ENCODE measurements at regions of chr12 and their contacts with region 1.

Region 1: DNA sequence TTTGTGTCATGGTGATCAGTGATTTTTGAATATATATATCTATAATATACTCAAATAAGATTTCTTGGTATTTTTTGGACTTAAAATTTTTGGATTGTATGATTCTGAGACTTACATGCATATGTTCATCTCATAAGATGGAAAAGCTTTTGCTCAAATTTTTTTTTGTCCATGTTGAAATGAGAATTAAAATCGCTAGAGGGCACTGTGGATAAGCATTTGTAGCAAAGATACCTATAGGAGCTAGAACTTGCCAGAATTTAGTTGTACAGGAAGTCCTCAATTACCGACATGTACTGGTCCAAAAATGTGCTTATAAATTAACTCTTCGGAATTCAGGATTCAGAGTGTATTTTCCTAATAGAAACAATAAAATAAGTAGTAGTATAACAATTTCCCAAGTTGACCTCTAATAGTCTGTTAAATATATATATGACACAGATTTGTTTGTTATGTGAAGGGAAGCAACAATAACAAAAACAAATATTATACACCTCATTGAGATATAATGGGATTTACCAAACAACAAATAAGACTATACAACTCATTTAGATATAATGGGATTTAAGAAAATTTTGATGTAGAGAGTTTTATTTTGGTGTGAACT is 179.6 kb downstream of the TMEM117 start:
- DNase-seq: peak; percentile 41
- H3K4me3 ChIP-seq: no peak overlapping the region
- H3K27ac ChIP-seq: no peak overlapping the region
- H3K4me1 ChIP-seq: no peaks in the 10 kb centered on the region
- H3K27me3 ChIP-seq: no peaks in the 10 kb centered on the region
- CTCF ChIP-seq: peak; percentile 50 to 63

Region 2: DNA sequence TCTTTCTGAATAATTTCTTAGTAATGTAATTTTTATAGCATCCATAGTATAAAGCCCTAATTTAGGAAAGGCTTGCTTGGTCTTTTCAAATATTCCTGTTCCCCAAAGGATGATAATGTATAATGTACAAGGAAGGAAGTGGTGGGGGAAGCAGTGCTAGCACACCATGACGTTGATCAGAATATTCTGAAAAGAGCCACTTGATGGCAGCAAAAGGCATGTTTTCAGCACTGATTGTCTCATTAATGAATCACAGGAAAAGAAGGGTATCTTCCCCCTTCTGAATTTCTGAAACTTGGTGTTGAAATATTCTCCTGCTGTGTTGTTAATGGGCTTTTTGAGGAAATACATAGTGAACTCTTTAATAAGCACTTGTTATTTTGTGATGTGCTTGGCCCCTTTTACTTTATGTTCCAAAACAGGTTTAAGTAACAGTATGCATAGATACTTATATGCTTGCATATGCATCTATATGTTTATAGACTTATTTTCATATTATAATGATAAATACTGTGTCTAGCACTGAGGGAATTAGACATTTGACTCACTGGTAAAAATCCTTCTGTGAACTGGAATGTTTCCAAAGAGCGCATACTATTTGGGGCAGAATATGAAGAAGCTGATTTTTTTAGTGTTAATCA is 57.6 kb before region 1 on chr12:
- CTCF ChIA-PET with region 1: no interaction called
- dilution Hi-C with region 1: no loop called
- in situ Hi-C with region 1: no loop called
- intact Hi-C with region 1: loop called (anchors 5 kb)
- DNase-seq: peak; percentile 52
- H3K4me3 ChIP-seq: no peak overlapping the region
- H3K27ac ChIP-seq: no peak overlapping the region
- H3K4me1 ChIP-seq: no peaks in the 10 kb centered on the region
- H3K27me3 ChIP-seq: no peaks in the 10 kb centered on the region
- CTCF ChIP-seq: peak; percentile 56 to 62

Region 3: GRCh38 chr12:44317651-44318126 is 302.3 kb after region 1 on chr12:
- CTCF ChIA-PET with region 1: interaction called, 5 read pairs
- dilution Hi-C with region 1: no loop called
- in situ Hi-C with region 1: no loop called
- intact Hi-C with region 1: loop called (anchors 5 kb)
- DNase-seq: no peak
- H3K4me3 ChIP-seq: no peak overlapping the region
- H3K27ac ChIP-seq: no peak overlapping the region
- H3K4me1 ChIP-seq: peaks cover 8% of the 10 kb centered on the region
- H3K27me3 ChIP-seq: no peaks in the 10 kb centered on the region
- CTCF ChIP-seq: peak; percentile 35 to 62

Measured in mammary epithelial cell (primary cell).